MCF 10A (cell line): ENCODE measurements at regions of chr1 and their contacts with region 1.

Region 1: DNA sequence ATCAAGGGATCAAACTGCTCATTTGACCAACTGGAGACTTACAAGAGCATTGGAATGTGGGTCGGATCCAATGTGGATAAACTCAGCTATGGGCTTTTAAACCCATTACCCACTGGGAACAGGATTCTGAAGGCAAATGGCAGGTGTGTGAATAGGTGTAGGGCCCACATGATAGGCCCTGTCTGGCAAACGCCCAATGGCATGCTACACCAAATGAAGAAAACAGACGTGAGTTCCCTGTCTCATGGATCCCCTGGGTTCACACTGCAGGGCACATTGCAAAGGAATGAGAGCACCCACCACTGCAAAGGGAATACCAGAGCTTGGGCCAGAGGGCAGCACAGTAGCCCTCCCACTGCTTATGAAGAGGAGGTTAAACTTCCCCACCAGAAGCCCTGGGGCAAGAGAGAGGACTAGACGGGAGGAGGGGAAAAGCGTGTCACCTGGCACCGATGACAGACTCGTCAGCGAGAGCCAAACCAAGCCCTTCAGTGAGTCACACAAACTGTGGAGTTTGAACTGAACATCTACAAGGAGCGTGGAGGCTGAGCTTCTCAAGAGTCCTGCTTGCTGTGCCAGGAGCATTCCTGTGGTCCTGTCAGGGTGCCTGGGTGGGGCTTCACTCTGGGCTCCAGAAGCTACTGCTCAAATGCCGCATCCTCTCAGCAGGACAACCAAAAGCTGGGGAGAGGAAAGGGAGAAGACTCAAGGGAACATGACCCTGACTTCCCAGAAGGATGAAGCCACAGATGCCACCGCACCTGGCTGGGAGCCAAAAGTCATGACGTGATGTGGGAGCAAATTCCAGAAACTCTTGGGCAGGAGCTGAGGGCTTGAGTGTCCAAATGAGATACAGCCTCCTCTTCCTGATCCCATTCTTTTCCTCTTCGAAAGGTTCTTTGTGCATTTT is 61.1 kb downstream of the TOMM20 start:
- DNase-seq: peak; percentile 100
- H3K4me3 Mint-ChIP-seq: peak overlapping the region; percentile 54
- H3K27ac Mint-ChIP-seq: peak overlapping the region; percentile 97
- H3K4me1 Mint-ChIP-seq: peaks cover 53% of the 10 kb centered on the region
- H3K27me3 Mint-ChIP-seq: no peaks in the 10 kb centered on the region
- CTCF ChIP-seq: no peak

Region 2: GRCh38 chr1:234486498-234487448 is 580.7 kb before region 1 on chr1:
- CTCF ChIA-PET with region 1: interaction called, 13 read pairs
- POLR2A ChIA-PET with region 1: no interaction called
- intact Hi-C with region 1: no loop called
- DNase-seq: peak; percentile 87
- H3K4me3 Mint-ChIP-seq: no peak overlapping the region
- H3K27ac Mint-ChIP-seq: no peak overlapping the region
- H3K4me1 Mint-ChIP-seq: peaks cover 15% of the 10 kb centered on the region
- H3K27me3 Mint-ChIP-seq: peaks cover 20% of the 10 kb centered on the region
- CTCF ChIP-seq: peak; percentile 96

Region 3: GRCh38 chr1:234631721-234632125 is 435.8 kb before region 1 on chr1:
- CTCF ChIA-PET with region 1: interaction called, 3 read pairs
- POLR2A ChIA-PET with region 1: interaction called, 14 read pairs
- intact Hi-C with region 1: no loop called
- DNase-seq: peak; percentile 75
- H3K4me3 Mint-ChIP-seq: no peak overlapping the region
- H3K27ac Mint-ChIP-seq: peak overlapping the region; percentile 78
- H3K4me1 Mint-ChIP-seq: peaks cover 27% of the 10 kb centered on the region
- H3K27me3 Mint-ChIP-seq: no peaks in the 10 kb centered on the region
- CTCF ChIP-seq: no peak

Region 4: DNA sequence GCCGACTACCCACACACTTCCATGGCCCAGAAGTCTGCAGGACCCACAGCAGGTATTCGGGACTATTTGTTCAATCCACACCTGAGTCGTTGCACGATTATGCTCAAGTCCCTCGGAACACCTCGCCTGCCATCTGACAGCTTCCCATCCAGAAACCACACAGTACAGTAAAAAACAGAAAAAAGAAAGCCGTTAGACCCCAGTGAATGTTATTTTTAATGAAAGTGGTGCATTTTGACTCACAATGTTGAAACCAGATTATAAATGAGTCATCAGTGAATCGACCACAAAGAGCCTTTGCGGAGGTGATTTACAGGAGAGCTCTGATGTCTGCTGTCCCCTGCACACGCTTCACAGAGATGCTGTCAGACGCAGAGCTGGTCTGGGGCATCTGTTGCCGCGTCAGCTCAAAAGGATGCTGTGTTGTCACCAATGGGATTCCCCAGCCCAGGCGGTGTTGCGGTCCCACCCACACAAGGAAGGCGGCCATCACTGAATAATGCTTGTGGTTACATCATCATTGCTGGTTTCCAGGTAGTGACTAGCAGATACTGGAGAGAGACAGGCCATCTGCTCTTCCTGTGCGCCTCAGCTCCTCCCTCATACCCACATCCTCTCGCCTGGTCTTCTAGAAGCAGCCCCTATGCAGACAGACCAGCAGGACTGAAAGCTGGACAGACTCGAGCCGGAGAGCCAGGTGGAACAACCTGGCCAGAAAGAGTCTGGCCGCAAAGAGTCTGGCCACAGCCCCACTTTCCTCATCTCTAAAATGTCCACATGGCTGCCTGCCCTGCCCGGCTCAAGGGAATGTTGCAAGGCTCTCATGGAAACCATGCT is 55.7 kb before region 1 on chr1:
- CTCF ChIA-PET with region 1: no interaction called
- POLR2A ChIA-PET with region 1: interaction called, 46 read pairs
- intact Hi-C with region 1: no loop called
- DNase-seq: peak; percentile 99
- H3K4me3 Mint-ChIP-seq: peak overlapping the region; percentile 47
- H3K27ac Mint-ChIP-seq: peak overlapping the region; percentile 92
- H3K4me1 Mint-ChIP-seq: peaks cover 14% of the 10 kb centered on the region
- H3K27me3 Mint-ChIP-seq: no peaks in the 10 kb centered on the region
- CTCF ChIP-seq: no peak

Region 5: GRCh38 chr1:235047331-235047871 is 20.1 kb before region 1 on chr1:
- CTCF ChIA-PET with region 1: interaction called, 3 read pairs
- POLR2A ChIA-PET with region 1: interaction called, 13 read pairs
- intact Hi-C with region 1: no loop called
- DNase-seq: no peak
- H3K4me3 Mint-ChIP-seq: no peak overlapping the region
- H3K27ac Mint-ChIP-seq: peak overlapping the region; percentile 46
- H3K4me1 Mint-ChIP-seq: peaks cover 11% of the 10 kb centered on the region
- H3K27me3 Mint-ChIP-seq: no peaks in the 10 kb centered on the region
- CTCF ChIP-seq: no peak

Region 6: DNA sequence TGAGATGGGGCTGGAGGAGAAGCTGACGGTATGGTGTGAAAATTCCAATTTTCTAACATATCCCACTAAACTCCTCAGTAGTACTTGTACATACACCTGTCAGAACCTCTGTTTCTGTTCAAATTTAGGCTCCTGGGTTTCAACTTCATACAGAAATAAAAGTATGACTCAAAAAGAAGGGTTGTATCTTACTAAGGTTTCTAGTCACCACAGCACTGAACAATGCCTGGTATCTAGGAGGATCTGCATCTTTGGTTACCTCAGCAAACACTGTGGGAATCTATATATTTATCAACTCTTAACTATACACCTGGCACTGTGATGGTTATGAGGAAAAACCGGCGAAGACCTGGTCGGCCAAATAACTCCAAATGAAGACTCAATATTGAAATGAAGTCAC is 79.8 kb after region 1 on chr1:
- CTCF ChIA-PET with region 1: no interaction called
- POLR2A ChIA-PET with region 1: no interaction called
- intact Hi-C with region 1: no loop called
- DNase-seq: no peak
- H3K4me3 Mint-ChIP-seq: no peak overlapping the region
- H3K27ac Mint-ChIP-seq: no peak overlapping the region
- H3K4me1 Mint-ChIP-seq: peaks cover 12% of the 10 kb centered on the region
- H3K27me3 Mint-ChIP-seq: no peaks in the 10 kb centered on the region
- CTCF ChIP-seq: no peak

Region 7: DNA sequence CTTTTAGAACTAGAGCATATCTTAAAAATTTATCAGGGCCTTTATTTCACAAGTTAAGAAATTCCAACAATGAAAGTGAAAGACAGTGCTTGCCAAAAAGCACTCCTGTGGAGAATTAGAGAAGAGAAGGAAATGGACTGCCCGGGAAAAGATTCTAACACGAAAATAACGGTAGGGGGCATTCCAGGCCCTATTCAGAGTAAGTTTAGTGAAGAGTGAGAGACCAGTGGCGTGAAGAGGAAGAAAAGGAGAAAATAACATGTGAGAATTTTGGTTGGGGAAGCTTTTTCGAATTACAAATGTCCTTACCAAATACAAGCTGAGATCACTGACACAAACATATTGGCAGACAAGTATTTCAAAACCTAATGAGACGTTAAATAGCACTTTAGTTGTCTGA is 131.9 kb after region 1 on chr1:
- CTCF ChIA-PET with region 1: no interaction called
- POLR2A ChIA-PET with region 1: no interaction called
- intact Hi-C with region 1: no loop called
- DNase-seq: peak; percentile 44
- H3K4me3 Mint-ChIP-seq: no peak overlapping the region
- H3K27ac Mint-ChIP-seq: peak overlapping the region; percentile 13
- H3K4me1 Mint-ChIP-seq: peaks cover 9% of the 10 kb centered on the region
- H3K27me3 Mint-ChIP-seq: no peaks in the 10 kb centered on the region
- CTCF ChIP-seq: peak; percentile 31